OCI-LY7 (cell line): ENCODE measurements at regions of chr5 and their contacts with region 1.

Region 1: GRCh38 chr5:112594095-112594850 is 143.4 kb upstream of the APC start:
- DNase-seq: peak; percentile 35
- H3K4me3 ChIP-seq: no peak overlapping the region
- H3K27ac ChIP-seq: no peak overlapping the region
- H3K4me1 ChIP-seq: peaks cover 8% of the 10 kb centered on the region
- CTCF ChIP-seq: no peak

Region 2: DNA sequence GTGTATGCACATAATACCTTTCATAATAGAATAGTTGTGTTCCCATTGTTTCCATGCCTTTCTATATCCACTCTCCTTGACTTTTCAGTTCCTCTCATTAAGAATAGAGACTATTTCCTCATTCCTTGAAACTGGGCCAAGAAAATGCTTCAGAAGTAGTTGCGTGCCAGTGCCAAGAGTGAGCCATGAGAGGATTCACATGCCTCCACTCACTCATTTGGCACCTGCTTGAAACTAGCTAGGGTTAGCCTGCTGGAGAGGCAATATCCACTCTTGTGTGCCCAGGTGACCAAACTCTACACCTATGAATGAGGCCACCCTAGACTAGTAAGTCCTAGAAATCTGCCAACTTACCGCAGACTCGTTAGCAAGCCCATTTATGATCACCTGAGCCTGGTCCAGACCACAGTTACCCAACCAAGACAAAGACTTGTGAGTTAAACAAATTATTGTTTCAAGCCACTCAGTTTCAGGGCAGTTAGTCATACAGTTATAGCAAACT is 451.5 kb before region 1 on chr5:
- CTCF ChIA-PET with region 1: no interaction called
- POLR2A ChIA-PET with region 1: no interaction called
- intact Hi-C with region 1: no loop called
- DNase-seq: no peak
- H3K4me3 ChIP-seq: no peak overlapping the region
- H3K27ac ChIP-seq: no peak overlapping the region
- H3K4me1 ChIP-seq: no peaks in the 10 kb centered on the region
- CTCF ChIP-seq: no peak

Region 3: GRCh38 chr5:112186401-112186990 is 407.8 kb before region 1 on chr5:
- CTCF ChIA-PET with region 1: no interaction called
- POLR2A ChIA-PET with region 1: no interaction called
- intact Hi-C with region 1: no loop called
- DNase-seq: peak; percentile 57
- H3K4me3 ChIP-seq: no peak overlapping the region
- H3K27ac ChIP-seq: no peak overlapping the region
- H3K4me1 ChIP-seq: no peaks in the 10 kb centered on the region
- CTCF ChIP-seq: peak; percentile 88

Region 4: GRCh38 chr5:112196584-112196983 is 397.7 kb before region 1 on chr5:
- CTCF ChIA-PET with region 1: no interaction called
- POLR2A ChIA-PET with region 1: no interaction called
- intact Hi-C with region 1: no loop called
- DNase-seq: no peak
- H3K4me3 ChIP-seq: no peak overlapping the region
- H3K27ac ChIP-seq: no peak overlapping the region
- H3K4me1 ChIP-seq: no peaks in the 10 kb centered on the region
- CTCF ChIP-seq: no peak

Region 5: DNA sequence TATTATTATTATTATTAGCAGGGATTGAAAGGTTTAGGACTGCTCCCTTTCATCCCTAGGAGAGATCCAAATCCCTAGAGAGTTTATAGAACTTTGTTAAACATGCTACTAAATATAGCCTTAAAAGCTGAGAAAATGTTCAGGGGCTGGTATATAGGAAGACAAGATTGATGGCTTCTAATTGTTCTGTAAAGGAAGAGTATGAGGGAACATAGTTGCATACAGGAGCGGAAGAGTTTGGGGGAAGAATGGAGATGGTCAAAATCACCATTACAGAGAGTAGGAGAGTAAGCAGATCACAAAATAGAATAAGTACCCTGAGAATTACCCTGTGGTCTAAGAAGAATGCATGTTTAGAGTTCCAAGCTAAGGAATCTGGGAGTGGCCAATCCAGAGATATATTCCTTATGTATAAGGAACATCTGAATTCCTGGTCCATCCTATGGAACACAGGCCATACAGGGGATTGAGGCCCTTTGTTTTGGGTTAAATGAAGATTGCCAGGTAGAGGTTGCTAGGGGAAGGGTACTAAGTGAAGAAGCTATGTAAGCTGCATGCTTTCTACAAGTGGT is 14.6 kb before region 1 on chr5:
- CTCF ChIA-PET with region 1: no interaction called
- POLR2A ChIA-PET with region 1: interaction called, 12 read pairs
- intact Hi-C with region 1: no loop called
- DNase-seq: no peak
- H3K4me3 ChIP-seq: no peak overlapping the region
- H3K27ac ChIP-seq: no peak overlapping the region
- H3K4me1 ChIP-seq: no peaks in the 10 kb centered on the region
- CTCF ChIP-seq: no peak